ENCODE measurements at regions of chr15 and their contacts with region 1.

Region 1: DNA sequence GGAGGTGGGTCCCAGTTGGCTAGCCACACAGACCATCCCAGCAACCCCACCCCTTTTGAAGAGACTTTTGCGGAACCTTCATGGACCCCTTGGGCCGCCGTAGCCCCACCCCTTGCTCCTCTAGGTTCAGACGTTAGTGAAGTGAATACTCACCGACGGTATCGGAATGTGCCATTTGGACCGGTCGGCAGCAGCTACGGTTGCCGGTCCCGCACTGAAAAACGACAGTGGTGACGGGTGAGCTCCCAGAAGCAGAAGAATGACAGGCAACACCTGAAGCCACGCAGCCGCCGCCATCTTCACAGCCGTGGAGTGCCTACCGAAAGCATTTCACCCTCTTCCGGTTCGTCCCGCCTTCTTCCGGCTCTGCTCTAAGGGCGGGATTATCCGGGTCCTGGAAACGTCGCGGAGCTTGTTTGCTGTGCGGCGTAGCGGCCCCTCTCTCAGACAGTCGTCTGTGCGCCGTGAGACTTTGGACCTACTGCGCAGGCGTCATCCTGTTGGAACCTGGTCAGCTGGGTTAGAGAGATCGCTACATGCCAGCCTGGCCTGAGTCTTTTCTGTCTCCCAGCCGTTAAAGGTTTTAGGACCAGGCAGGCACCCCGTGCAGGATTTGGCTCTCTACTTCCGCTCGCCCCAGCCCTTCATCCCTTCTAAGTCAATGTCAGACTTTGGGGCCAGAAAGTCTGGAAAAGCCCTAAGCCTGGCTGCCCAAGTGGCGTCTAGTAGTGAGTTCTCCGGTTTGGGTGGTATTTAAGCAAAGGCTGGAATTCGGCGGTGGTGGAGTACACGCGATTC is at the starts of genes GANC and TMEM87A:
- DNase-seq: peak; percentile 85
- ATAC-seq: peak; percentile 89
- H3K4me3 Mint-ChIP-seq: peak within 1 kb of the TSS; percentile 100
- H3K27ac Mint-ChIP-seq: peak within 1 kb of the TSS; percentile 100
- H3K4me1 Mint-ChIP-seq: peaks cover 50% of the 10 kb centered on the region
- H3K27me3 Mint-ChIP-seq: no peaks in the 10 kb centered on the region
- CTCF ChIP-seq: no peak
- total RNA-seq, gene GANC: 59.9 and 72.2 TPM in 2 replicates
- total RNA-seq, gene TMEM87A: 45.4 and 52.6 TPM in 2 replicates

Region 2: GRCh38 chr15:40593588-40594428 is 1679.5 kb before region 1 on chr15 and contains the start of gene KNL1:
- CTCF ChIA-PET with region 1: no interaction called
- POLR2A ChIA-PET with region 1: interaction called, 4 read pairs
- intact Hi-C with region 1: loop called (anchors 5 kb)
- DNase-seq: peak; percentile 84
- ATAC-seq: peak; percentile 83
- H3K4me3 Mint-ChIP-seq: peak within 1 kb of the TSS; percentile 95
- H3K27ac Mint-ChIP-seq: peak within 1 kb of the TSS; percentile 99
- H3K4me1 Mint-ChIP-seq: peaks cover 21% of the 10 kb centered on the region
- H3K27me3 Mint-ChIP-seq: peaks cover 2% of the 10 kb centered on the region
- CTCF ChIP-seq: no peak
- total RNA-seq, gene KNL1: 5.1 and 7.7 TPM in 2 replicates

Region 3: DNA sequence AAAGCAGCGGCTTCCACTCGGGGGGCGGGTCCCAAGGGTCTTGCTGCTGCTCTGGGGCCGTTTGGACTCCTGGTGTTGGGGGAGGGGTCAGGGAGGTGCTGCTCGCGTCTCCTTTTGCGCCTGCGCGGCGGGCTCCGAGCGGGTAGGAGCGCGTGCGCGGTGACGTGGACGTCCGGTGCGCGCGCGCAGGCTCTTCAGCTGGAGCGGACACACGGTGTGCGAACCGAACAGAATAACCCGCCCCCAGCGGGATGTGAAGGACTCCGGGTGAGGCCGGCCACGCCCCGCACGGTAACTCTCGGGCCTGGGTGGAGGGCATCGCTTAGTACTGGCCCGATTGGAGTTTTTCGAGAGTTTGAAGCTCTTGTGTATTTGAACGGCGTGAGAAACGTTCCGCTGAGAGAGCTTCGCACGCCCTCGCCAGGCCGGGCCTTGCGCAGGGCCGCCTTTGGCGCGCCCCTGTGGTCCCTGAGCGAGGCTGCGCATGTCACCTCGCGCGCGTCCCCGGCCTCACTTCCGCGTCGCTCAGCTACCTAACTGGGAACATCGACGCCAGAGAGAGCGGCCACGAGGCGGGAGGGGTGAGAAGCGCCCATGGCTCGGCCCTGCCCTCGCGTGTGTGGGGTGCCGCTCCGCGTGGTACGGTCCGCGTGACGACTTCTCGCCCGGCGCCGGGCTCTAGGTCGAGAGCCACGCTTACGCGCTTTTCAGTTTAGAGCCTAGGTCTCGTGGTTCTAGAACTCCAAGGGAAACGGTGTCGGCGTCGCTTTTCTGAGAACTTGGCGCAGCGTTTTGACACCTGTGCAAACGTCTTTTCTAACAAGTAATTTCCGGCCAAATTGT is 612.8 kb before region 1 on chr15 and contains the start of gene MGA:
- CTCF ChIA-PET with region 1: no interaction called
- POLR2A ChIA-PET with region 1: interaction called, 6 read pairs
- intact Hi-C with region 1: loop called (anchors 5 kb)
- DNase-seq: peak; percentile 92
- ATAC-seq: peak; percentile 84
- H3K4me3 Mint-ChIP-seq: peak within 1 kb of the TSS; percentile 91
- H3K27ac Mint-ChIP-seq: peak within 1 kb of the TSS; percentile 91
- H3K4me1 Mint-ChIP-seq: peaks cover 51% of the 10 kb centered on the region
- H3K27me3 Mint-ChIP-seq: peaks cover 2% of the 10 kb centered on the region
- CTCF ChIP-seq: no peak
- total RNA-seq, gene MGA: 49.9 and 58.3 TPM in 2 replicates

Region 4: GRCh38 chr15:42313463-42313862 is 40.2 kb after region 1 on chr15:
- CTCF ChIA-PET with region 1: no interaction called
- POLR2A ChIA-PET with region 1: no interaction called
- intact Hi-C with region 1: loop called (anchors 1 kb)
- DNase-seq: no peak
- ATAC-seq: no peak
- H3K4me3 Mint-ChIP-seq: no peak overlapping the region
- H3K27ac Mint-ChIP-seq: no peak overlapping the region
- H3K4me1 Mint-ChIP-seq: no peaks in the 10 kb centered on the region
- H3K27me3 Mint-ChIP-seq: no peaks in the 10 kb centered on the region
- CTCF ChIP-seq: no peak

Region 5: DNA sequence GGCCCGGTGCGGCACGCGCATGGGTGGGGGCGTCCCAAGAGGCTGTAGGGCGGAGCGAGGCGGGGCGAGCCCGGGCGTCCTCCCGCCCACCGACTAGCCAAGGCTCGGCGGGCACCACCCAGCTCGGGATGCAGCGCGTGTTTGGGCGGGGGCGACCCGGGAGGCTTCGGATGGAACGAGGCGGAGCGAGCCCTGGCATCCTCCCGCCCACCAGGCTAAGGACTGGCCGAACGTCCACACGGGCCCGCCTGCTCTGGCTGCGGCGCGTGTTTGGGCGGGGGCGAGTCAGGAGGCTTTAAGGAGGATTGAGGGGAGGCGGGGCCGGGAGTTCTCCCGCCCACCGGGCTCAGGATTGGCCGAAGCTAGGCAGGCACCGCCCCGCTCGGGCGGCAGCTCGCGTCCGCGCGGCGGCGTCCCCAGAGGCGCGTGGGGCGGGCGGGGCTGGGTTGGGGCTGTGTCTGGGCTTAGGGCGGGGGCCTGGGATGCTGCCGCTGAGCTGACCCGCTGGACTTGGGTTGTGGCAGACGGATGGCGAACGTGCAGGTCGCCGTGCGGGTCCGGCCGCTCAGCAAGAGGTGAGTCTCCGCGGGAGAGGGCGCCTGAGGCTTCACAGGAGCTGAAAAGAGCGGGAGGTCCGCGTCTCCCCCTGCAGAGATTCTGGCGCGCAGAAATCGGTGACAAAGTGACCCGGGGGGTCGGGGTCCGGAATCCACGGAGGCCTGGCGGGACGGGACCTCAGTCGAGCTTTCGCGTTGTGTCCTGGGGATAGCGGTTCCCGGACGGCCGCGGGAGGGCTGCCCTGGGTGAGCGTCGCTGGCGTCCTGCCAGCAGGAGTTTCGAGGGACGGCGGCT is 302.1 kb after region 1 on chr15 and contains the start of gene STARD9:
- CTCF ChIA-PET with region 1: no interaction called
- POLR2A ChIA-PET with region 1: interaction called, 5 read pairs
- intact Hi-C with region 1: loop called (anchors 1 kb)
- DNase-seq: peak; percentile 98
- ATAC-seq: peak; percentile 85
- H3K4me3 Mint-ChIP-seq: peak within 1 kb of the TSS; percentile 96
- H3K27ac Mint-ChIP-seq: peak within 1 kb of the TSS; percentile 83
- H3K4me1 Mint-ChIP-seq: peaks cover 21% of the 10 kb centered on the region
- H3K27me3 Mint-ChIP-seq: no peaks in the 10 kb centered on the region
- CTCF ChIP-seq: no peak
- total RNA-seq, gene STARD9: 5.5 and 7.1 TPM in 2 replicates

Region 6: GRCh38 chr15:43185157-43186017 is 912.1 kb after region 1 on chr15 and contains the start of gene CCNDBP1:
- CTCF ChIA-PET with region 1: no interaction called
- POLR2A ChIA-PET with region 1: no interaction called
- intact Hi-C with region 1: loop called (anchors 10 kb)
- DNase-seq: peak; percentile 85
- ATAC-seq: peak; percentile 93
- H3K4me3 Mint-ChIP-seq: peak within 1 kb of the TSS; percentile 97
- H3K27ac Mint-ChIP-seq: peak within 1 kb of the TSS; percentile 96
- H3K4me1 Mint-ChIP-seq: peaks cover 32% of the 10 kb centered on the region
- H3K27me3 Mint-ChIP-seq: no peaks in the 10 kb centered on the region
- CTCF ChIP-seq: no peak
- total RNA-seq, gene CCNDBP1: 65.6 and 67.2 TPM in 2 replicates